SK-N-SH (cell line): ENCODE measurements at regions of chr11 and their contacts with region 1.

Region 1: DNA sequence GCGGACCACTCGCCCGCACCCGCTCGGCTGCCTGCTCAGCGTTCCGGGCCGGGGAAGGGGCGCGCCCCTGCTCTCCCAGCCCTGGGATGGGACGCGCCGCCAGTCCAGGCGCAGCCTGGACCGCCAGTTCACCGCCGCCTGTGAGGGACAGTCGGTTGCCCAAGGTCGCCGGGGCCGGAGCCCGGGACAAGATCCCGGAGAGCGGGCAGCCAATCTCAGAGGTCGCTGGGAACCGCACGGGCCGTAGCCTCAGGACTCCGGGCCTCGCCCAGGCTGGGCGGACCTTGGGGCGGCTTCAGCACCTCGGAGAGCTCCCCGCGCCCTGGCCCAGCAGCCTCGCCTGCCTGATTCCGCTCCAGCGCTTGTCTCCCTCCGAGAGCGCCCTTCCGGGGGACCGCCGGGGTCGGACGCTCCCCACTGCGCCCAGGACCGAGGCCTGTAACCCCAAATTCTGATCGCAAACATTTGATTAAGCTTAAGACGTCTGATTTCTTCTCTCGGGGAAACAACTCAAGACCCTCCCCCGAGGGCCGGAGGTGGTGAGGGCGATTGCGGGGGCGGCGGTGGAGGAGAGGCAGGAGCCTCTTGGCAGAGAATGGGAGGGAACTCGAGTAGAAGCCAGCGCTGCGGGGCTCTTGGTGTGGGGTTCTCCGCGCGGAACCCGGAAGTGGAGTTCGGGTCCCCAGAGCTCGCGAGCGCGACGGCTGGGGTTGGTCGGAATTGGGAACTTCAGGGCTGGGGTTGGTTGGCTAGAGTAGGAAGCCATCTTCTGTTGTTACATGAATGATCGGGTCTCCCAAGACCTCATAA is 1.1 kb upstream of the CHRM4 start:
- DNase-seq: peak; percentile 80
- H3K4me3 ChIP-seq: peak overlapping the region; percentile 52 to 60
- H3K27ac ChIP-seq: no peak overlapping the region
- H3K4me1 ChIP-seq: peaks cover 0 to 27% of the 10 kb centered on the region in 2 experiments; a peak in 2 of 4 replicates
- H3K27me3 ChIP-seq: peaks cover 15% of the 10 kb centered on the region
- CTCF ChIP-seq: no peak
- EP300 ChIP-seq: no peak
- RAD21 ChIP-seq: no peak

Region 2: DNA sequence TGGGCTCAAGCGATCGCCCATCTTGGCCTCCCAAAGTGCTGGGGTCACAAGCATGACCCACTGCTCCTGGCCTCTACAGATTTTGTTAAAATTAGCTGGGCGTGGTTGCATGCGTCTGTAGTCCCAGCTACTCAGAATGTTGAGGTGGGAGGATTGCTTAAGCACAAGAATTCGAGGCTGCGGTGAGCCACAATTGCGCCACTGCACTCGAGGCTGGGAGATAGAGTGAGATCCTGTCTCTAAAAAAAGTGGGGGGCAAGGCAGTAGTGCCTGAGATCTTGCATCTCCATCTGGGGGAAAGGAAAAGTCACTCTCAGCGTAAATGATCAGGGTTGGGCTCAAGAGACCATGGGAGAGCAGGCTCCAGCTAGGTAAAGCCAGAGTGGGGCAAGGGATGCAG is 55.8 kb before region 1 on chr11:
- CTCF ChIA-PET with region 1: no interaction called
- POLR2A ChIA-PET with region 1: no interaction called
- DNase-seq: no peak
- H3K4me3 ChIP-seq: no peak overlapping the region
- H3K27ac ChIP-seq: no peak overlapping the region
- H3K4me1 ChIP-seq: peaks cover 11 to 13% of the 10 kb centered on the region in 2 experiments; a peak in 3 of 4 replicates
- H3K27me3 ChIP-seq: peaks cover 10% of the 10 kb centered on the region
- CTCF ChIP-seq: no peak
- EP300 ChIP-seq: no peak
- RAD21 ChIP-seq: no peak

Region 3: GRCh38 chr11:46346886-46347636 is 45.6 kb before region 1 on chr11 and contains the start of gene DGKZ:
- CTCF ChIA-PET with region 1: interaction called, 24 read pairs
- POLR2A ChIA-PET with region 1: no interaction called
- DNase-seq: peak; percentile 100
- H3K4me3 ChIP-seq: peak within 1 kb of the TSS; percentile 82 to 86
- H3K27ac ChIP-seq: peak within 1 kb of the TSS in 1 of 2 experiments; percentile 5; a peak in 1 of 4 replicates
- H3K4me1 ChIP-seq: peaks cover 19 to 22% of the 10 kb centered on the region in 2 experiments; a peak in 3 of 4 replicates
- H3K27me3 ChIP-seq: no peaks in the 10 kb centered on the region
- CTCF ChIP-seq: peak; percentile 53
- EP300 ChIP-seq: no peak
- RAD21 ChIP-seq: peak; percentile 56; the same call in 1 of the 2 replicates
- polyA plus RNA-seq, gene DGKZ: 23.9 and 33.2 TPM in 2 replicates

Region 4: DNA sequence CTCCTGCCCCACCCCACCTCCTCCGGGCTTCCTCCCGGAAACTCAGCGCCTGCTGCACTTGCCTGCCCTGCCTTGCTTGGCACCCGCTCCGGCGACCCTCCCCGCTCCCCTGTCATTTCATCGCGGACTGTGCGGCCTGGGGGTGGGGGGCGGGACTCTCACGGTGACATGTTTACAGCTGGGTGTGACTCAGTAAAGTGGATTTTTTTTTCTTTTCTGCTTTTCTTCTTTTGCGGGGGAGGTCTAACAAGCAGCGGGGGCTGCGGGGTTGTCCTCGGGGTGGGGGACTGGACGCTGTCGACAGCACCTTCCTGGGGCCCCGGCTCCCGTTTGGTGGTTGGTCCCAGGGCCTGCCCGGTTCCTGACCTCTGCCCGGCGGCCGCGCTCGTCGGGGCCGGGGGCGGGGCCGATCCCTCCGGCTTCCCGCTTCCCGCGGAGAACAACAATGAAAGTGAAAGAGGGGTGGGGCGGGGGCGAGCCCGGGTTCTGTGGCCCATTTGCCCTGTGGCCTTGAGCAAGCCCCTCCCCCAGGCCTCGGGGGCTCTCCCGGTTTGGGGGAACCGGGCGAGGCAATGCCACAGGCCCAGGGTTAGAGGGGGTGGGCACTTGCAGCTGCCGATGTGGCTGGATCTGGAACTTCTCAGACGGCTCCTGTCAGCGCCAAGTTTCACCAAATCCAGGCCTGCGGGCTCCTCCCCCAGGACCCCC is 12.1 kb before region 1 on chr11:
- CTCF ChIA-PET with region 1: interaction called, 37 read pairs
- POLR2A ChIA-PET with region 1: interaction called, 7 read pairs
- DNase-seq: peak; percentile 87
- H3K4me3 ChIP-seq: peak overlapping the region; percentile 60 to 63
- H3K27ac ChIP-seq: peak overlapping the region; percentile 61 to 88
- H3K4me1 ChIP-seq: peaks cover 10 to 23% of the 10 kb centered on the region in 2 experiments; a peak in 2 of 4 replicates
- H3K27me3 ChIP-seq: no peaks in the 10 kb centered on the region
- CTCF ChIP-seq: no peak
- EP300 ChIP-seq: no peak
- RAD21 ChIP-seq: no peak

Region 5: DNA sequence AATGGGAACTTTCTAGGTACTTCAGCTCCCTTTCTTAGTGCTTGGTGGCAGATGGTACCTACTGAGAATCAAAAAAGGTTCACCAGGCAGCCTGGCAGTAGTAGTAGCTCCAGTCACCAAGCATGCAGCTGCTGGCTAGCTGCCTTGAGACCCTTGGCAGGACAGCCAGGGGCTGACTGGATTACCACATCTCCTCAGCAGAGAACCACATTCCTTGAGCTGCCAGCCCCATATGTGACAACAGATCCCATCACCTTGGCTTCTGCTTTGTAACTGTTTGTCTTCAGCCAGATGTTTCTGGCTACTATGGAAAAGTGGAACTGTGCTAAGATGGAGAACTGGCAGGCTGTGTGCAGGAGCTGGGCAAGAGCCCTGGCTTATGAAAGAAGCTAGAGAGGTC is 38.6 kb after region 1 on chr11:
- CTCF ChIA-PET with region 1: interaction called, 25 read pairs
- POLR2A ChIA-PET with region 1: no interaction called
- DNase-seq: no peak
- H3K4me3 ChIP-seq: no peak overlapping the region
- H3K27ac ChIP-seq: no peak overlapping the region
- H3K4me1 ChIP-seq: peaks cover 11 to 13% of the 10 kb centered on the region in 2 experiments; a peak in 2 of 4 replicates
- H3K27me3 ChIP-seq: no peaks in the 10 kb centered on the region
- CTCF ChIP-seq: no peak
- EP300 ChIP-seq: no peak
- RAD21 ChIP-seq: no peak

Region 6: DNA sequence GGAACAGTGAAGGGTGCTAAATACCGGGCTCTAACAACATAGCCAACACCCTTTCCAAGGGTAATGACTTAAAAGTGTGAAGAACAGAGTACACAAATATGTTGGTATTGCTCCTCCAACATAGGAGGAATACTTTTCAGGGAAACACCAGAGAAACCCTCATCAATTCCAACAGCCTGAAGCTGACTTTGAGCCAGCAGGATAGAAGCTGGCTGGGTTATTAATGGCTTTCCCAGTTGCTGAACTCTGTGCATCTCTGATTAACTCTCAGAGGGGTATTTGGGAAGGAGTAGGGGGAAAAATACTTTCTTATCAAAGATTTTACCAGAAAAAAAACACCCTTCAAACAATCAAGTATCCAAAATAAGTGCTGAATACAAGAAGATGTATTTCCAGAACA is 105.6 kb after region 1 on chr11:
- CTCF ChIA-PET with region 1: interaction called, 24 read pairs
- POLR2A ChIA-PET with region 1: no interaction called
- DNase-seq: no peak
- H3K4me3 ChIP-seq: no peak overlapping the region
- H3K27ac ChIP-seq: no peak overlapping the region
- H3K4me1 ChIP-seq: peaks cover 0 to 8% of the 10 kb centered on the region in 2 experiments; a peak in 1 of 4 replicates
- H3K27me3 ChIP-seq: no peaks in the 10 kb centered on the region
- CTCF ChIP-seq: no peak
- EP300 ChIP-seq: no peak
- RAD21 ChIP-seq: no peak

Region 7: GRCh38 chr11:46521961-46522681 is 129.5 kb after region 1 on chr11:
- CTCF ChIA-PET with region 1: interaction called, 12 read pairs
- POLR2A ChIA-PET with region 1: no interaction called
- DNase-seq: no peak
- H3K4me3 ChIP-seq: no peak overlapping the region
- H3K27ac ChIP-seq: no peak overlapping the region
- H3K4me1 ChIP-seq: peaks cover 6 to 40% of the 10 kb centered on the region in 2 experiments; a peak in 3 of 4 replicates
- H3K27me3 ChIP-seq: no peaks in the 10 kb centered on the region
- CTCF ChIP-seq: peak; percentile 48
- EP300 ChIP-seq: no peak
- RAD21 ChIP-seq: peak; percentile 38

Region 8: DNA sequence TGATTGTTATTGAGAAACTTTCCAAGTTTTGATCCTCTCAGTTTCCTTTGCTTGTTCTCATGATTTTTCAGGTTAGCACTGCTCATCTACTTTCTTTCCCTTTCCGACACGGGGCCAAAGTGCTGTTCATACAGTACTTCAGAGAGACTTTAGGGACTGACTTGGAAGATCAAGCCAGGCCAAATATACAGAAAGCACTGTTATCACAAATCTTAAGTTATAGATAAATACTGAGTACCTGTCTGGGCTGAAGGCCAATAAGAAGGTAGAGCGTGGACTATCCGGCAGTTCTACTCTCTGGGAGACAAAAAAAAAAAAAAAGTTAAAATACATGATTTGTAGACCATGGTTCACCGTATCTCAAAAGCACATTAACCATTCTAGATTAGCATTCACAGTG is 155.0 kb after region 1 on chr11:
- CTCF ChIA-PET with region 1: interaction called, 105 read pairs
- POLR2A ChIA-PET with region 1: no interaction called
- DNase-seq: no peak
- H3K4me3 ChIP-seq: no peak overlapping the region
- H3K27ac ChIP-seq: no peak overlapping the region
- H3K4me1 ChIP-seq: no peaks in the 10 kb centered on the region
- H3K27me3 ChIP-seq: no peaks in the 10 kb centered on the region
- CTCF ChIP-seq: no peak
- EP300 ChIP-seq: no peak
- RAD21 ChIP-seq: no peak